Activated CD4-positive, alpha-beta T cell treated with anti-CD3 and anti-CD28 coated beads, Interleukin-2, amount 10 ng/mL, durations not matched to agents 24 days and 14 days (primary cell): ENCODE measurements at regions of chr12 and their contacts with region 1.

Region 1: GRCh38 chr12:3885277-3886094 is 12.3 kb upstream of the PARP11 start:
- DNase-seq: peak; percentile 86
- H3K4me3 Mint-ChIP-seq: peak overlapping the region; percentile 34
- H3K27ac Mint-ChIP-seq: no peak overlapping the region
- H3K4me1 Mint-ChIP-seq: peaks cover 12% of the 10 kb centered on the region
- H3K27me3 Mint-ChIP-seq: peaks cover 11% of the 10 kb centered on the region

Region 2: DNA sequence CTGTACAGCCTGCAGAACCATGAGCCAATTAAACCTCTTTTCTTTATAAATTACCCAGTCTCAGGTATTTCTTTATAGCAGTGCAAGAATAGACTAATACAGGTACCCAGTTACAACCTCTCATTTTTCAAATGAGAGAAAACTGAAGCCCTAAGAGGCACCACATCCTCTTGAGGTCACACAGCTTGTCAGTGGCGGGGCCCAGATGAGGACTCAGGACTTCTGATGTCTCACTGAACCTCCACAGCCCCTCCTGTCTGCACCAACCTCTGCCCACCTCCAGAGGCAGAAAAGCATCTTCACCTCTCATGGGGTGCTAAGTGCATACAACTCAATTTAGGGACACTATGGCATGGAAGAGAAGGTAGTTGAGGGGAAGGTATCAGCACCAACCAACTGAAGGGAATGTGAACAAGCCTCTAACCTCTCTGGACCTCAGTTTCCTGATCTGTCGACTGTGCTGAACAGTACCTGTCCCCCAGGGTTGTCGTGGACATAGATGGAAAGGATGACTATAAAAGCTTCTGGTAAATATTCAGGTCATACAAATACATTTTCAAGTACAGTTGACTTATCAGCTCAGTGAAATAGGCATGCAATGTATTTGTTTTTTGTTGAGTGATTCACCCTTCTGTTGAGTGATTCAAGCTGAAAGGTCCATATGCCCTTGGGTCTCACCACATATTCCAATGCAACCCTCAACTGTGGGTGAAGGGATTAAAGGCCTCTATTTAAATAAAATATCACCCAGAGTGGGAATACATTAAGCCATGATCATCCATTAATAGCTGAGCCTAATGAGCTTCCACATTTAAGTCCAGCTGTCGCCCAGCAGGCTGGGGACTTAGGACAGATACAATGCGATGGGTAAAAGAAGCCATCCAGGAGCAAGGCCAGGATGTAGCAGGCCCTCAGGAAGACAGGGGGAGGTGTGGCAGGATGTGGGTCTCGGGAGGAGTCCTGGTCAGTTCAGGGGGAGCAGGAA is 252.9 kb before region 1 on chr12:
- intact Hi-C with region 1: no loop called
- DNase-seq: peak; percentile 68
- H3K4me3 Mint-ChIP-seq: no peak overlapping the region
- H3K27ac Mint-ChIP-seq: peak overlapping the region; percentile 56
- H3K4me1 Mint-ChIP-seq: peaks cover 11% of the 10 kb centered on the region
- H3K27me3 Mint-ChIP-seq: no peaks in the 10 kb centered on the region

Region 3: GRCh38 chr12:3962631-3963483 is 77.4 kb after region 1 on chr12:
- intact Hi-C with region 1: loop called (anchors 2 kb)
- DNase-seq: peak; percentile 86
- H3K4me3 Mint-ChIP-seq: no peak overlapping the region
- H3K27ac Mint-ChIP-seq: peak overlapping the region; percentile 17
- H3K4me1 Mint-ChIP-seq: peaks cover 22% of the 10 kb centered on the region
- H3K27me3 Mint-ChIP-seq: no peaks in the 10 kb centered on the region

Region 4: GRCh38 chr12:3998968-3999826 is 113.7 kb after region 1 on chr12:
- intact Hi-C with region 1: loop called (anchors 2 kb)
- DNase-seq: no peak
- H3K4me3 Mint-ChIP-seq: no peak overlapping the region
- H3K27ac Mint-ChIP-seq: no peak overlapping the region
- H3K4me1 Mint-ChIP-seq: peaks cover 5% of the 10 kb centered on the region
- H3K27me3 Mint-ChIP-seq: peaks cover 3% of the 10 kb centered on the region

Region 5: GRCh38 chr12:4037747-4038312 is 152.3 kb after region 1 on chr12:
- intact Hi-C with region 1: loop called (anchors 5 kb)
- DNase-seq: no peak
- H3K4me3 Mint-ChIP-seq: no peak overlapping the region
- H3K27ac Mint-ChIP-seq: no peak overlapping the region
- H3K4me1 Mint-ChIP-seq: peaks cover 7% of the 10 kb centered on the region
- H3K27me3 Mint-ChIP-seq: peaks cover 27% of the 10 kb centered on the region

Region 6: GRCh38 chr12:4107436-4107878 is 222.0 kb after region 1 on chr12:
- intact Hi-C with region 1: loop called (anchors 2 kb)
- DNase-seq: peak; percentile 93
- H3K4me3 Mint-ChIP-seq: peak overlapping the region; percentile 47
- H3K27ac Mint-ChIP-seq: peak overlapping the region; percentile 83
- H3K4me1 Mint-ChIP-seq: peaks cover 42% of the 10 kb centered on the region
- H3K27me3 Mint-ChIP-seq: peaks cover 2% of the 10 kb centered on the region

Region 7: GRCh38 chr12:4164559-4165558 is 279.4 kb after region 1 on chr12:
- intact Hi-C with region 1: no loop called
- DNase-seq: peak; percentile 91
- H3K4me3 Mint-ChIP-seq: peak overlapping the region; percentile 84
- H3K27ac Mint-ChIP-seq: peak overlapping the region; percentile 95
- H3K4me1 Mint-ChIP-seq: peaks cover 49% of the 10 kb centered on the region
- H3K27me3 Mint-ChIP-seq: no peaks in the 10 kb centered on the region

Region 8: DNA sequence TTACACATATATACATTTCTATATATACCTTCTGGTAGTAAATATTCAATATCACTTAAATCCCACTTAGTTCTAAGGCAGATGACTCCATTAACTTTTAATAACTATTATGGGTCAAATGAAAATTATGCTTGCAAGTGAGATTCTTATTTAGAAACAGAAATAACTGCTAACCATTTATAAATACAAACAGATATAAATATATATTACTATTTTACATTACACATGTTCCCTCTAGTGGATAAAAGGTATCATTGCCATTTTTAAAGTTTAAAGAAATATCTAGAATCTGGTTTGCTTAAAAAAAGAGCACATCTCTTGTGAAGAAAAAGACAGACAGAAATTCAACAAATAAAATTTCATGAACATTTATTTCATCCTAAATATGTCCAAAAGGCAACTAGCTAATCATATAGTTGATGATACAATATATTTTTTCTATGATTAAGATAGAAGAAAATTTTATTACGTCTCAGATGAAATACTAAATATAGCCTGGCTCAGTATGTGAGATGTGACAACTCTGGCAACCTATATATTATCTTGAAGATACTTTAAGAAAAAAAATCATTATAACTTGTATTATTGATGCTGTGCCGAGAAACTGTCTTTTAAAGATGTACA is 641.5 kb after region 1 on chr12:
- intact Hi-C with region 1: loop called (anchors 5 kb)
- DNase-seq: no peak
- H3K4me3 Mint-ChIP-seq: no peak overlapping the region
- H3K27ac Mint-ChIP-seq: no peak overlapping the region
- H3K4me1 Mint-ChIP-seq: peaks cover 5% of the 10 kb centered on the region
- H3K27me3 Mint-ChIP-seq: no peaks in the 10 kb centered on the region